ENCODE measurements at regions of chr16 and their contacts with region 1.

Region 1: DNA sequence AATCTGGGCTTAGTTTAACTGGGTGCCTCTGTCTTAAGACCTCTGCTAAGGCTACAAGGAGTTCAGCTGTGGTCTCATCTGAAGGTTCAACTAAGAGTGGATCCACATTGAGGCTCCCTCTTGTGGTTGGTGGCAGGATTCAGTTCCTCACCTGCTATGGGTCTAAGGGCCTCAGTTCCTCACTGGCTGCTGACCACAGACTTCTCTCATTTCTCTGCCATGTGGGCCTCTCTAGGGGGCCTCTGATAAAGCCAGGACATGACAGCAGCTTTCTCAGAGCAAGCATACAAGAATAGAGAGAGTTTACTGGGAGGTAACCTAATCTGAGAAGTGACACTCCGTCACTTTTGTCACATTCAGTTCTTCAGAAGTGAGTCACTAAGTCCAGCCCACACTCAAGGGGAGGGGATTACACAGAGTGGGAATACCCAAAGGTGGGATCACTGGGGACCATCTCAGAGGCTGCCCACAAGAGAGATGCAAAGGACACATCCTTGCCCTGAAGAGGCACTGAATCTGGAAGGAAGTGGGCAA is 19.2 kb upstream of the ABAT start:
- DNase-seq: peak in 3 of 7 donors; percentile 28 to 68 (median 41)
- H3K4me3 ChIP-seq: no peak overlapping the region
- H3K27ac ChIP-seq: no peak overlapping the region
- H3K4me1 ChIP-seq: no peaks in the 10 kb centered on the region
- H3K27me3 ChIP-seq: no peaks in the 10 kb centered on the region
- CTCF ChIP-seq: peak in 4 of 6 experiments; percentile 11 to 44 (median 32)
- POLR2A ChIP-seq: no peak

Region 2: GRCh38 chr16:8572919-8573724 is 82.1 kb before region 1 on chr16:
- intact Hi-C with region 1: loop called in 1 of 2 experiments (anchors 5 kb)
- DNase-seq: peak in 3 of 7 donors; percentile 20 to 34 (median 28)
- H3K4me3 ChIP-seq: no peak overlapping the region
- H3K27ac ChIP-seq: no peak overlapping the region
- H3K4me1 ChIP-seq: no peaks in the 10 kb centered on the region
- H3K27me3 ChIP-seq: peaks cover 4% of the 10 kb centered on the region
- CTCF ChIP-seq: peak; percentile 18 to 47 (median 35)
- POLR2A ChIP-seq: no peak

Region 3: GRCh38 chr16:8797364-8798173 is 142.3 kb after region 1 on chr16 and contains the starts of genes PMM2 and TMEM186:
- intact Hi-C with region 1: loop called (anchors 5 kb)
- DNase-seq: peak; percentile 94 to 98 (median 97)
- H3K4me3 ChIP-seq: peak within 1 kb of the TSS; percentile 81 to 99 (median 94)
- H3K27ac ChIP-seq: peak within 1 kb of the TSS; percentile 41 to 92 (median 63)
- H3K4me1 ChIP-seq: peaks cover 24 to 31% of the 10 kb centered on the region in 2 donors
- H3K27me3 ChIP-seq: no peaks in the 10 kb centered on the region
- CTCF ChIP-seq: peak in 1 of 6 experiments; percentile 27
- POLR2A ChIP-seq: no peak
- total RNA-seq, gene PMM2: 7.4 to 69.9 (median 23.1) TPM
- total RNA-seq, gene TMEM186: 7.9 to 14.6 (median 13.2) TPM

Region 4: GRCh38 chr16:8885674-8886592 is 230.7 kb after region 1 on chr16:
- intact Hi-C with region 1: loop called (anchors 5 to 10 kb)
- DNase-seq: peak in 4 of 7 donors; percentile 45 to 55 (median 48)
- H3K4me3 ChIP-seq: no peak overlapping the region
- H3K27ac ChIP-seq: peak overlapping the region in 1 of 5 donors; percentile 3
- H3K4me1 ChIP-seq: peaks cover 7 to 21% of the 10 kb centered on the region in 2 donors
- H3K27me3 ChIP-seq: no peaks in the 10 kb centered on the region
- CTCF ChIP-seq: no peak
- POLR2A ChIP-seq: no peak

Region 5: GRCh38 chr16:9008601-9009260 is 353.5 kb after region 1 on chr16:
- intact Hi-C with region 1: loop called in 1 of 2 experiments (anchors 10 kb)
- DNase-seq: peak; percentile 64 to 86 (median 81)
- H3K4me3 ChIP-seq: peak overlapping the region in 1 of 4 donors; percentile 12
- H3K27ac ChIP-seq: no peak overlapping the region
- H3K4me1 ChIP-seq: peaks cover 0 to 8% of the 10 kb centered on the region in 2 donors
- H3K27me3 ChIP-seq: peaks cover 4% of the 10 kb centered on the region
- CTCF ChIP-seq: peak; percentile 67 to 85 (median 83)
- POLR2A ChIP-seq: no peak